ENCODE measurements at regions of chr12 and their contacts with region 1.

Region 1: DNA sequence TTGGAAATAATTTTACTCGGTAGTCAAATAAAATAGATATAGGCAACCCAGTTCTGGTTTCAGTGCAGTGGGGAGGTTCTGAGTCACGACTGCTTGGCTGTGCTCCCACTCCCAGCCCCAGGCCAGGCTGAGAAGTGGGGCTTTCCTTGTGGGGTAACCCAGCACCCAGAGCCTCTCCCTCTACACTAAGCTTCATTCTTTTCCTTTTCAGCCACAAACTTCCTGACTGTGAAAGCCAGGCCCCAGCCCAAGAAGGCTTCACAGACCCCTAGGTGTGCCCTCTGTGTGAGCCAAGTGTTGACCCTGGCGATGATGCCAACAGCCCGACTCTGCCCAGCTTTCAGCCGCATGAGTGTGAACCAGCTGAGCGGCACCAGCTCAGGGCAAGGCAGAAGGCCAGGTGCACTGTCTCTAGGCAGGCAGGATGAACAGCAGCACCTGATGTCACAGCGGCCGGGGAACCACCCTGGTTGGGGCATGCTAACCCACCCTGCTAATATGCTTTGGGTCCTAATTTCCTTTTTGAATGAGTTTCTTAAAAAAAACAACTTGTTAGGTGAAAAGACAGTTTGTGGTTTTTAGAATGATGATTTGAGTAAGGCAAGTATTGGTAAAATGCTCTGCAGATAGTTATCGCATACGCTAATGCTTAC is 42.2 kb upstream of the ATP23 start:
- DNase-seq: peak; percentile 86
- H3K4me3 ChIP-seq: no peak overlapping the region
- H3K27ac ChIP-seq: peak overlapping the region; percentile 93 to 99 (median 98)
- H3K4me1 ChIP-seq: peaks cover under 1 to 54% (median 53%) of the 10 kb centered on the region in 4 donors
- H3K27me3 ChIP-seq: no peaks in the 10 kb centered on the region
- CTCF ChIP-seq: no peak
- EP300 ChIP-seq: no peak
- POLR2A ChIP-seq: no peak

Region 2: DNA sequence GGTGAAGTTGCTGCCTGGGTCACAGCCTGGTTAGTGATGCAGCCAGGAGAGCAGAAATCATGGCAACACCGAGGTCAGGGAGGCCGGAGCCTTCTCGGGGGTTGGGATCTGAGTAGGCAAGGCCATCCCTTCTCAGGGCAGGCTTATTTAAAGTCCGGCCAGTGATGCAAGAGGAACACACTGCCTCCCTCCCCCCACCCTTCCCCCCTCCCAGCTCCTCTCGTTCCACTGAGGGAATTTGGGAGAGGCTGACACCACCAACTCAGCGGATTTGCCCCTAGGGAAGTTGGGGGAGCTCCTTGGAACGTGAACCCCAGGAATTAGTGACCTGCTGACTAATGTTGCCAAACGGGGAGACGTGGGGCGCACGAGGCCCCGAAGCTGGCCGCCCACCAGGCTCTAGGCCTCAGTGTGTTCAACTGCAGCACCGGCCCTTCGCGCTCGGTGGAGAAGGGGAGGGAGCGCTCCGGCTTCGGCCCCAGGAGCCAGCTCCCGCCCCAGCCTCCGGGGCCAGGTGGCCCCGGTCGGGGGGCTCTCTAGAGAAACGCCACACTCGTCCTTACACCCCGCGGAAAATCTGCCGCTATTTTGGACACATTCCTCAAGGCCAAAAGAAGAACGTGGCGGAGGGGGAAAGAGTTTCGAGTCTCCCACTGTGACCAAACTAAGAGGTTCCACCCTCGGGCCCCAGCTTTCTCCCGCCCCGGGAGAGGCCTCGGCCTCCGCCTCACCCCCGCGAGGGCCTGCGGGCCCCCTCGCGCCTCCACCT is 54.2 kb before region 1 on chr12:
- intact Hi-C with region 1: loop called (anchors 1 kb)
- DNase-seq: peak; percentile 92
- H3K4me3 ChIP-seq: peak overlapping the region; percentile 90 to 100 (median 97)
- H3K27ac ChIP-seq: peak overlapping the region; percentile 100
- H3K4me1 ChIP-seq: peaks cover 0 to 65% (median 51%) of the 10 kb centered on the region in 4 donors
- H3K27me3 ChIP-seq: no peaks in the 10 kb centered on the region
- CTCF ChIP-seq: no peak
- EP300 ChIP-seq: no peak
- POLR2A ChIP-seq: peak; percentile 5 to 14

Region 3: DNA sequence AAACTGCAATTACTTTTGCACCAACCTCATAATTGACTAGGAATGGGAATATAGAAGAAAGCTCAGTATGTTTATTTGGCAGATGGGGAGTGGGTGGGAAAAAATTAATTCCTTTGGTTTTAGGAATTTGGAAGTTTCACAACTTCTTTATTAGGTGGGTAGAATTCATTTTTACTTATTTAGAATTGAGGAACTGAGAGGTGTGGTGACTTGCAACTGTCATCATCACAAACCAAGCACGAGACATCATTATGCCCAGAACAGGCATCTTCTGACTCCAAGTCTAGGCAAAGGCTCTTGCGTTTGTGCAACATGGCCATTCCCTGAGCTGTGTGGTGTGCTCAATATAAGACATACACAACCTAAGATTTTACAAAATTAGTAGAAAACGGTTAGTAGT is 422.3 kb after region 1 on chr12:
- intact Hi-C with region 1: no loop called
- DNase-seq: no peak
- H3K4me3 ChIP-seq: no peak overlapping the region
- H3K27ac ChIP-seq: no peak overlapping the region
- H3K4me1 ChIP-seq: no peaks in the 10 kb centered on the region
- H3K27me3 ChIP-seq: no peaks in the 10 kb centered on the region
- CTCF ChIP-seq: no peak
- EP300 ChIP-seq: no peak
- POLR2A ChIP-seq: no peak

Measured in sigmoid colon (tissue), 7 donors.